Tibial artery (tissue), 4 donors: ENCODE measurements at regions of chr1 and their contacts with region 1.

Region 1: GRCh38 chr1:171781176-171781875 is at the start of gene METTL13:
- DNase-seq: peak; percentile 99
- H3K4me3 ChIP-seq: peak within 1 kb of the TSS; percentile 71 to 76
- H3K27ac ChIP-seq: peak within 1 kb of the TSS; percentile 85
- H3K4me1 ChIP-seq: peaks cover 0 to 43% (median 25%) of the 10 kb centered on the region in 4 donors
- H3K27me3 ChIP-seq: no peaks in the 10 kb centered on the region
- CTCF ChIP-seq: no peak

Region 2: GRCh38 chr1:171730052-171730451 is 51.3 kb before region 1 on chr1:
- intact Hi-C with region 1: no loop called
- DNase-seq: no peak
- H3K4me3 ChIP-seq: no peak overlapping the region
- H3K27ac ChIP-seq: peak overlapping the region in 1 of 2 donors; percentile 14
- H3K4me1 ChIP-seq: peaks cover 0 to 49% (median 9%) of the 10 kb centered on the region in 4 donors
- H3K27me3 ChIP-seq: no peaks in the 10 kb centered on the region
- CTCF ChIP-seq: no peak

Region 3: DNA sequence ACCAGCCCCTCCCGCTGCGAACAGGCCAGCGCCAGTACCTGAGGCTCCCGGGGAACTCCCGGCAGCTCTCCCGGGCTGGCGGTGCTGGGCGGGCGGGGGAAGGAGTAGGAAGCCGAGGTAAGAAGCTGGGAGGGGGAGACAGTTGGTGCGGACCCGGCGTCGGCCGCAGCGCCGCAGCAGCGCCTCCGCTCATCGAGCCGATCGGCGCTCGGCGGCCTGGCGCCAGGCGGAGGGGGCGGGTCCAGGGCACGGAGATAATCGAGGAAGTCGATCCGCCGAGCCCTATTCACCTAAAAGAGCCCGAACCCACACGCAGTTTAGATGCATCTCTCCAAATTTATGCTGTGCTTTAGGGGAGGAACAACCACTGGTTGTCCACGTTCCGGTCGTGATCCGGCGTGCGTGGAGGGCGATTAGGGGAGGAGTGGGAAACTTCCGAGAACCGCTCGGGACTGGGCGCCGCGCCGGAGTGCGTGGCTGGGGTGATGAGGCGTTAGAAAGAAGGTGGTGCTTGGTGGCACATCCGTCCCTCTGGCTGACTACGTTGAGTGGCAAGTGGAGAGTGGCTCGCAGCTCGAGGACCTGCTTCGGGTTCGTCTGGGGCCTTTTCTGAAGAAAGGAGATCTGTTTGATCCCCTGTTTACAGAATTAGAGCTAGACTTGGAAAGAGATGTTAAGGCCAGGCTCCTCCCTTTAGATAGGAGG is 39.3 kb before region 1 on chr1 and contains the start of gene VAMP4:
- intact Hi-C with region 1: loop called (anchors 2 kb)
- DNase-seq: peak; percentile 88 to 94
- H3K4me3 ChIP-seq: peak within 1 kb of the TSS; percentile 67 to 81
- H3K27ac ChIP-seq: peak within 1 kb of the TSS; percentile 93 to 98
- H3K4me1 ChIP-seq: peaks cover 0 to 54% (median 39%) of the 10 kb centered on the region in 4 donors
- H3K27me3 ChIP-seq: no peaks in the 10 kb centered on the region
- CTCF ChIP-seq: no peak

Region 4: GRCh38 chr1:171841941-171842761 is 60.8 kb after region 1 on chr1:
- intact Hi-C with region 1: loop called (anchors 1 kb)
- DNase-seq: peak in 1 of 2 donors; percentile 65
- H3K4me3 ChIP-seq: peak overlapping the region; percentile 64 to 92
- H3K27ac ChIP-seq: peak overlapping the region; percentile 64 to 74
- H3K4me1 ChIP-seq: peaks cover 0 to 14% (median 8%) of the 10 kb centered on the region in 4 donors
- H3K27me3 ChIP-seq: no peaks in the 10 kb centered on the region
- CTCF ChIP-seq: no peak